ENCODE measurements at regions of chr10 and their contacts with region 1.

Region 1: GRCh38 chr10:122435212-122435827 is 19.1 kb upstream of the ARMS2 start:
- DNase-seq: no peak
- ATAC-seq: peak; percentile 40 to 71 (median 66)
- H3K4me3 ChIP-seq: no peak overlapping the region
- H3K27ac ChIP-seq: no peak overlapping the region
- H3K4me1 ChIP-seq: no peaks in the 10 kb centered on the region
- H3K27me3 ChIP-seq: no peaks in the 10 kb centered on the region
- CTCF ChIP-seq: peak; percentile 14 to 51 (median 45)

Region 2: GRCh38 chr10:122342293-122343134 is 92.8 kb before region 1 on chr10:
- intact Hi-C with region 1: loop called in 1 of 3 experiments (anchors 10 kb)
- DNase-seq: peak in 2 of 6 donors; percentile 16 to 53
- ATAC-seq: peak; percentile 58 to 83 (median 75)
- H3K4me3 ChIP-seq: no peak overlapping the region
- H3K27ac ChIP-seq: no peak overlapping the region
- H3K4me1 ChIP-seq: peaks cover 0 to 4% (median 0%) of the 10 kb centered on the region in 3 donors
- H3K27me3 ChIP-seq: no peaks in the 10 kb centered on the region
- CTCF ChIP-seq: peak; percentile 39 to 68 (median 57)

Region 3: GRCh38 chr10:122541541-122542002 is 106.3 kb after region 1 on chr10:
- intact Hi-C with region 1: no loop called
- DNase-seq: no peak
- ATAC-seq: peak; percentile 61 to 89 (median 84)
- H3K4me3 ChIP-seq: no peak overlapping the region
- H3K27ac ChIP-seq: peak overlapping the region in 1 of 4 donors; percentile 44
- H3K4me1 ChIP-seq: no peaks in the 10 kb centered on the region
- H3K27me3 ChIP-seq: no peaks in the 10 kb centered on the region
- CTCF ChIP-seq: no peak